ENCODE measurements at regions of chr13 and their contacts with region 1.

Region 1: GRCh38 chr13:44350775-44351509 is 22.7 kb upstream of the SERP2 start:
- DNase-seq: no peak
- ATAC-seq: no peak

Region 2: GRCh38 chr13:44218501-44219240 is 132.3 kb before region 1 on chr13:
- intact Hi-C with region 1: no loop called
- DNase-seq: peak; percentile 80
- ATAC-seq: peak; percentile 93

Region 3: DNA sequence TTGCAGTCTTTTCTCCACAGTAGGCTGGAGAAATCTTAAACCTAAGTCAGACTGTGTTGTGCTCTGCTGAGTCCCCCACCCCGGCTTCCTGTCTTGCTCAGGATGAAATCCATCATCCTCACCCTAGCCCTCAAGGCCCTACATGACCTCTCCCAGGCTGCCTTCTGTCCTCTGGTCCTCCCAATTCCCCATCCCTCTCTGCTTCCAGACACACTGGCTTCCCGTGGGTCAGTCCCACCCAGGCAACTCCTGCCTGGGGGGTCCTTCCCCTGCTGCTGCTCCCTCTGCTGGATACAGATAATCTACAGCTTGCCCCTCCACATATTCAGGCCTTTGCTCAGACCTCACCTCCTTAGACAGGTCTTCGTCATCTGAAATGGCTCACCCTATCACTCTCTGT is 1332.8 kb after region 1 on chr13:
- intact Hi-C with region 1: loop called (anchors 10 kb)
- DNase-seq: no peak
- ATAC-seq: no peak